Spleen (tissue), 13 donors: ENCODE measurements at regions of chr18 and their contacts with region 1.

Region 1: GRCh38 chr18:3665780-3666525 is 216.0 kb downstream of the TGIF1 start:
- DNase-seq: peak; percentile 88
- H3K4me3 ChIP-seq: peak overlapping the region in 3 of 8 donors; percentile 3 to 47 (median 4)
- H3K27ac ChIP-seq: peak overlapping the region; percentile 54 to 79 (median 70)
- H3K4me1 ChIP-seq: peaks cover 0 to 33% (median 24%) of the 10 kb centered on the region in 6 donors
- H3K27me3 ChIP-seq: no peaks in the 10 kb centered on the region
- CTCF ChIP-seq: peak; percentile 89 to 98 (median 96)
- POLR2A ChIP-seq: no peak

Region 2: DNA sequence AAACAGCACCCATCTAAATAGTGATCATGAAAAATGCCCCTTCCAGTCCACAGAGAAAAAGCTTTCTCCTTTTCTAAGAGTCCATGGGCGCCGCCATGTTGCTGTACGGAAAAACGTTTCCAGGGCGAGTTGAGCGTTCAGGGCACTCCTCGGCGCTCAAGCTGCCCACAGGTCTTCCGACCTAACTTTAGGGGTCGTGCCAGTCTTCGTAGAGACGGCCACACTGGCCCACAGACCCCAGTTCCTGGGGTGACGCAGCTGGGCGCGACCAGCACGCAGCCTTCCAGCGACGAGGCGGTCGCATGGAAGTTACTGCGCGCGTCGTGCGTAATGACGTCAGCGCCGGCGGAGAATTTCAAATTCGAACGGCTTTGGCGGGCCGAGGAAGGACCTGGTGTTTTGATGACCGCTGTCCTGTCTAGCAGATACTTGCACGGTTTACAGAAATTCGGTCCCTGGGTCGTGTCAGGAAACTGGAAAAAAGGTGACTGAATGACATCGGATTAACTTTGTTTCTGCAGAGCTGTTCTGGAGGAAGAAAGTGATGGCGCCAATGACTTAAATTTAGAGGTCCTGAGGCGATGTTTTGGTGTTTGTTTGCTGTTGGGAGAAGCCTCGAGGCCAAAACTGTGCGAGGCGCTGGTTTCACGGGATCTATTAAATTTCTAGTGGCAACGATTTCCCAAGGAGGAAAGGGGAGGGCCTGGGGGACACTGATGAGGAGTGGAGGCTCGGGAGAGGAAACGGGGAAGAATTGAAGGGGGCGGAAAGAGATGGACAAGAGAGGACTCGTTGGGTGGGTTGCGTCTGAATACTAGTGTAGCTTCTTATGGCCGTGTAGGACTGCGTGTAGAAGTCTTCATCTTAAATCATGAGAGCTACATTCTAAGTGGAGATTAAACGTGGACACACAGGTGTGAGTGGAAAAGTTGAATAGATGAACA is 1094.5 kb before region 1 on chr18 and contains the starts of genes METTL4 and NDC80:
- intact Hi-C with region 1: no loop called
- DNase-seq: peak; percentile 96
- H3K4me3 ChIP-seq: peak within 1 kb of the TSS; percentile 59 to 84 (median 63)
- H3K27ac ChIP-seq: peak within 1 kb of the TSS; percentile 93 to 99 (median 96)
- H3K4me1 ChIP-seq: peaks cover 16 to 68% (median 33%) of the 10 kb centered on the region in 6 donors
- H3K27me3 ChIP-seq: no peaks in the 10 kb centered on the region
- CTCF ChIP-seq: peak in 3 of 11 experiments; percentile 4 to 20 (median 17)
- POLR2A ChIP-seq: no peak
- total RNA-seq, gene METTL4: 12.5 to 30.8 (median 16.9) TPM
- total RNA-seq, gene NDC80: 3.4 to 7.3 (median 4.4) TPM

Region 3: GRCh38 chr18:3281456-3282400 is 384.2 kb before region 1 on chr18:
- intact Hi-C with region 1: loop called (anchors 5 kb)
- DNase-seq: no peak
- H3K4me3 ChIP-seq: no peak overlapping the region
- H3K27ac ChIP-seq: peak overlapping the region in 2 of 8 donors; percentile 24 to 65
- H3K4me1 ChIP-seq: peaks cover 0 to 47% (median 24%) of the 10 kb centered on the region in 6 donors
- H3K27me3 ChIP-seq: no peaks in the 10 kb centered on the region
- CTCF ChIP-seq: peak; percentile 52 to 87 (median 71)
- POLR2A ChIP-seq: no peak

Region 4: DNA sequence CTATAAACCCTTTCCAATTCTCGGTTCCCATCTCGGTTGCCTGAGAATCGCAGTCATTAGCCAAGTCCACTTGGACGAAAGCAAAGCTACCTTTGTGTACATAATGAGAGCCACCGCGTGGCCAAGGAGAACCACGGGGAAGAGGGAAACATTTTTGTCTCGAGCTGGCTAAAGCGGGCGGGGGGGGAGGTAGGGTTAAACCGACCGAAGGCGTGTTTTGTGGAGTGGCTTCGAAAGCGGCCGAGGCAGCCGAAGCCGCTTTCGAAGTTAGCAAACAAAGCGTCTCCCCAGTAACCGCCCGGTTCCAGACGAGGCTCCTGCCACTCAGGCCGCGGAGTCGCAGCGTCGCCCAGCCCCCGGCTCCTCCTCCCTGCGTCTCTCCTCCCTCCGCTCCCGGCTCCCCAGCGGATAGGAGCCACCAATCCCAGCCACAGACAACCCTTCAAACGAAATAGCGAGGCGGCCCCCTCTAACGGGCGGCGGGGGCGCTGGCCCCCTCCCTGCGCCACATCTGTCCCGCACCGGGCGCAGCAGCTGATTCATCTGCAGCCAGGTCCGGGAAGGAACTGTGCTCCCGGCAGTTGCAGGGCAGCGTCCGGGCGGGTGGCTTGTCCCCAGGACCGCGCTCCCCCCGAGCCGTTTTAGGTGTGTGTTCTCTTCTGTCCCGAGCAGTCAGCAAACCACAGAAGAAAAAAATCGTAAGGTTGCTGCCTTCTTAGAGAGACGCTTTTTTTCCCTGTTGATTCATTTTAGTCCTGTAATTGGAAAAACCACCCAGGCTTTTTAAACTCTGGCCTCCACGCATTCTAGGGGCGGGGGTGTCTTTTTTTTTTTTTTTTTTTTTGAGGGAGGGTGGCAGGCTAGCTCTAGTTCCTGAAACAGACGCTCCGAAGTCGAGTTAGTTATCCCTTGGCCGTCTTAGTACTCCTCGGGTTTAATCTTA is 217.8 kb before region 1 on chr18:
- intact Hi-C with region 1: loop called (anchors 10 kb)
- DNase-seq: peak; percentile 96
- H3K4me3 ChIP-seq: peak overlapping the region; percentile 56 to 80 (median 74)
- H3K27ac ChIP-seq: peak overlapping the region; percentile 94 to 99 (median 99)
- H3K4me1 ChIP-seq: peaks cover 5 to 46% (median 26%) of the 10 kb centered on the region in 6 donors
- H3K27me3 ChIP-seq: no peaks in the 10 kb centered on the region
- CTCF ChIP-seq: peak in 3 of 11 experiments; percentile 11 to 34 (median 14)
- POLR2A ChIP-seq: peak in 2 of 3 donors; percentile 22 to 82

Region 5: DNA sequence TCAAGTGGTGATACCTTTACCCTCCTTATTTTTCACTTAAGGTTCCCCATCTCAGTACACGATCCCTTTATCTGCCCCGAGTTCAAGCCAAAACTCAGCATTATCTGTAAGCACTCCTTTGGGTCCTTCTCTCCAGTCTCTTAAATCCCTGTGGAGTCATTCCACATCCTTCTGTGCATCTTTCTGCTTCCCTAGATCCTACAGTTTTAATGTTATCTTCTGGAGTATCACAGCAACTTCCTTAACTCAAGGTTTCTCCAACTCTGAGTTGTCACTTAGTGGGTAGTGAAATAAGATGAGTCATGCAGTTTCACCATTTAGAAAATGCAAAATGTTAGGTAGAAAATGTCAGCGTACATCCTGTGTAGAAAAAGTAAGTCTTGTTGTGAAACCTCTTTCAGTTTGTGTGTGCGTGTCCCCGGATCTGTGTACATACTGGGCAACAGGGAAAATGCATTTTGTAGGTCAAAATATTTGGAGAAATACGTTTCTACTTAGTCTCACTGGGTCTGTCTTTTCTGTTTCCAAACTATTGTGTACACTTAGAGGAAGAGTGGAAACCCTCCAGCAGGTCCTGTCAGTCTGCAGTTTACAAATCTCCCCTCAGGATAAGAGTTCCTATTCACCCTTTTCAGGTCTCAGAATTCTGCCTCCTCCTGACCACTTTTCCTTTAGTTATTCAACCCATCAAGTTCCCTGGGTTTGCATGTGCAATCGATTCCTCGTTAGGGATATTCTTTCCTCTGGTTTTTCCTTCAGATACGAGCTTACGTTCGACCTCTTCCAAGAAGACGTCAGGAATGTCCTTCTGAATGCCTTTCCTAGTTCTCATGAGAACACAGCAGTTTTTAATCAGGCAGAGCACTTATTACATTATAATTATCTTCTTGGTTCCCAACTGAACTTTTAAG is 61.2 kb before region 1 on chr18:
- intact Hi-C with region 1: loop called (anchors 10 kb)
- DNase-seq: peak; percentile 35
- H3K4me3 ChIP-seq: peak overlapping the region in 7 of 8 donors; percentile 11 to 65 (median 30)
- H3K27ac ChIP-seq: peak overlapping the region; percentile 44 to 94 (median 90)
- H3K4me1 ChIP-seq: peaks cover 31 to 61% (median 49%) of the 10 kb centered on the region in 6 donors
- H3K27me3 ChIP-seq: no peaks in the 10 kb centered on the region
- CTCF ChIP-seq: peak in 2 of 11 experiments; percentile 7 to 8
- POLR2A ChIP-seq: no peak